Uterus (tissue), 4 donors: ENCODE measurements at regions of chr9 and their contacts with region 1.

Region 1: GRCh38 chr9:72592502-72593403 is 71.3 kb downstream of the TMC1 start:
- DNase-seq: peak in 1 of 2 donors; percentile 40
- H3K4me3 ChIP-seq: no peak overlapping the region
- H3K27ac ChIP-seq: no peak overlapping the region
- H3K4me1 ChIP-seq: no peaks in the 10 kb centered on the region
- H3K27me3 ChIP-seq: no peaks in the 10 kb centered on the region
- CTCF ChIP-seq: peak; percentile 80 to 92 (median 88)
- POLR2A ChIP-seq: no peak

Region 2: GRCh38 chr9:72292256-72292682 is 300.5 kb before region 1 on chr9:
- intact Hi-C with region 1: loop called (anchors 10 kb)
- DNase-seq: no peak
- H3K4me3 ChIP-seq: no peak overlapping the region
- H3K27ac ChIP-seq: no peak overlapping the region
- H3K4me1 ChIP-seq: no peaks in the 10 kb centered on the region
- H3K27me3 ChIP-seq: no peaks in the 10 kb centered on the region
- CTCF ChIP-seq: peak; percentile 54 to 69 (median 64)
- POLR2A ChIP-seq: no peak